Heart left ventricle (tissue), 16 donors: ENCODE measurements at regions of chr7 and their contacts with region 1.

Region 1: GRCh38 chr7:88465600-88465999 is 158.9 kb upstream of the STEAP4 start:
- DNase-seq: no peak
- ATAC-seq: no peak
- H3K4me3 ChIP-seq: no peak overlapping the region
- H3K27ac ChIP-seq: no peak overlapping the region
- H3K4me1 ChIP-seq: no peaks in the 10 kb centered on the region
- H3K27me3 ChIP-seq: no peaks in the 10 kb centered on the region
- CTCF ChIP-seq: no peak
- POLR2A ChIP-seq: no peak

Region 2: DNA sequence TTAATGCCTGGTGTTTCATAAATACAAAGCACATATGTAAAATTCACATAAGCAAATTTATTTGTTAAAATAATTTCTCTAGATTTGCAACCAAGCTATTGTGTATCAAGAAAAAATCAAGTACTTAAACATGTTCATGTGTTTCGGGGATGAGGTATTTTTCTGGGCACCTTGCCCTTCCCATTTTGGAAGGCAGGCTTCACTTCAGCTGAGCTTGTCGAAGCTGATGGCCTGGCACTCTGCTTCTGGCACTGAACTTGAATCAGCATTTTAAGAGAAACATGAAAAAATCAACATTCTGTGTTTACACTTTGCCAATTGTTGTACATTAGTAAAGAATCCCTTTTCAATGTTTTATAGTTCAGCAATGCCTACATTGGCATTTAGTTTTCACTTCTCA is 20.2 kb after region 1 on chr7:
- intact Hi-C with region 1: loop called in 1 of 10 experiments (anchors 2 kb)
- DNase-seq: no peak
- ATAC-seq: no peak
- H3K4me3 ChIP-seq: no peak overlapping the region
- H3K27ac ChIP-seq: no peak overlapping the region
- H3K4me1 ChIP-seq: peaks cover 0 to 2% (median 0%) of the 10 kb centered on the region in 12 donors
- H3K27me3 ChIP-seq: no peaks in the 10 kb centered on the region
- CTCF ChIP-seq: no peak
- POLR2A ChIP-seq: no peak

Region 3: DNA sequence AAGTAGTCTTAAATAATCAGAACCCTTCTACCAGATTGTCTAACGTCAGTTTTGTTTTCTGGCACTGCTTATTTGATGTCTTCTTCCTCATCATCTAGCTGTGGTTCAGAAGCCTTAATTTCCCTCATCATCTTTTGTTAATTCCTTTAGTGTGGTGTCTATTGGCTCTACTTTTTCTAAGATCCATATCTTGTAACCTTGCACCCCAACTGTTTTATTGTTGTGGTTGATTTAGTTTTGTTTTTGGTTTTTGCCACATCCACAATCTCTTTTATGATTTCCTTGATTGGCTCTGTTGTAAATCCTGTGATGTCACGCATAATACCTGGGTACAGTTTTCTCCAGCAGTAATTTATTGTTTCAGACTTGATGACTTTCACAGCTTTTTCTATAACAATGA is 793.5 kb after region 1 on chr7:
- intact Hi-C with region 1: no loop called
- DNase-seq: no peak
- ATAC-seq: no peak
- H3K4me3 ChIP-seq: no peak overlapping the region
- H3K27ac ChIP-seq: no peak overlapping the region
- H3K4me1 ChIP-seq: no peaks in the 10 kb centered on the region
- H3K27me3 ChIP-seq: no peaks in the 10 kb centered on the region
- CTCF ChIP-seq: no peak
- POLR2A ChIP-seq: no peak